OCI-LY7 (cell line): ENCODE measurements at regions of chr5 and their contacts with region 1.

Region 1: GRCh38 chr5:126544087-126544740 is 50.8 kb downstream of the ALDH7A1 start:
- DNase-seq: peak; percentile 86
- H3K4me3 ChIP-seq: no peak overlapping the region
- H3K27ac ChIP-seq: no peak overlapping the region
- H3K4me1 ChIP-seq: peaks cover 21% of the 10 kb centered on the region
- CTCF ChIP-seq: peak; percentile 87

Region 2: GRCh38 chr5:126339215-126339805 is 204.9 kb before region 1 on chr5:
- CTCF ChIA-PET with region 1: no interaction called
- POLR2A ChIA-PET with region 1: interaction called, 9 read pairs
- intact Hi-C with region 1: loop called (anchors 1 kb)
- DNase-seq: peak; percentile 74
- H3K4me3 ChIP-seq: no peak overlapping the region
- H3K27ac ChIP-seq: no peak overlapping the region
- H3K4me1 ChIP-seq: no peaks in the 10 kb centered on the region
- CTCF ChIP-seq: peak; percentile 98

Region 3: GRCh38 chr5:126354012-126354857 is 190.0 kb before region 1 on chr5:
- CTCF ChIA-PET with region 1: no interaction called
- POLR2A ChIA-PET with region 1: interaction called, 7 read pairs
- intact Hi-C with region 1: loop called (anchors 1 kb)
- DNase-seq: peak; percentile 46
- H3K4me3 ChIP-seq: no peak overlapping the region
- H3K27ac ChIP-seq: no peak overlapping the region
- H3K4me1 ChIP-seq: no peaks in the 10 kb centered on the region
- CTCF ChIP-seq: peak; percentile 76

Region 4: GRCh38 chr5:126587551-126588390 is 43.6 kb after region 1 on chr5:
- CTCF ChIA-PET with region 1: no interaction called
- POLR2A ChIA-PET with region 1: no interaction called
- intact Hi-C with region 1: no loop called
- DNase-seq: no peak
- H3K4me3 ChIP-seq: no peak overlapping the region
- H3K27ac ChIP-seq: no peak overlapping the region
- H3K4me1 ChIP-seq: no peaks in the 10 kb centered on the region
- CTCF ChIP-seq: no peak

Region 5: DNA sequence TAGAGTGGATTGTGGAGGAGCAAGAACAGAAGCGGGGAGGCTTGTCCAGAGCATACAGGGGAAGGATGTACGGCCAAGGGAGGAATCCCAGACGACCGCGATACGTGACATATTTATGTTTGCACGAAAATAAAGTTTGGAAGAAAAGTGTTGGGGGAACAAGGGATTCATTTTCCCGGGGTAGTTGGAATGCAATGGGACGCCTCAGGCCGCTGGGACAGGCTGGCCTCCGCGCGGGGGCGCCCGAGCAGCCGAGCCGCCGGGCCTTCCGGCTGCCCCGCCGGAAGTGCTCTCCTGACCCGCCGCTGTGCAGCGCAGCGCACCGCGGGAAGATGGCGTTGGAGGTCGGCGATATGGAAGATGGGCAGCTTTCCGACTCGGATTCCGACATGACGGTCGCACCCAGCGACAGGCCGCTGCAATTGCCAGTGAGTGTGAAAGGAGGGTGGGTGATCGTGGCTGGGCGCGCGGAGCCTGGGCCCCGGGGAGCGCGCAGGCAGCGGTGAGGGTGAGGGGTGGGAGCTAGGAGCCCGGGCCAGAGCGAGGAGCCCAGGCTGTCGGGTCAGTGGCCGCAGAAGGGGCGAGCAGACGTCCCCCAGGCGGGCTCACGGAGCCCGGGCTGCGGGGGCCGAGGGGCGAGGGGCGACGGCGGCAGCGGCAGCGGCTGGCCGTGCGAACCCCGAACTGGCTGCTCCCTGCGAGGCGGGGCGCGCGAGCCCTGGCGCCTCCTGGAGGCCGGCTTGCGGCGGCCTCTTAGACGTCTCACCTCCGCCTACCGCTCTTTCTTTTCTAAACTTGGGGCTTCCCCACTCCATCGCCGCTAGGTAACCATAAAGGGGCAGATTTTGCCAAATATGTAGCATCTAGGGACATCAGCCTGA is 56.7 kb after region 1 on chr5 and contains the start of gene PHAX:
- CTCF ChIA-PET with region 1: no interaction called
- POLR2A ChIA-PET with region 1: interaction called, 9 read pairs
- intact Hi-C with region 1: loop called (anchors 1 kb)
- DNase-seq: peak; percentile 90
- H3K4me3 ChIP-seq: peak within 1 kb of the TSS; percentile 86
- H3K27ac ChIP-seq: peak within 1 kb of the TSS; percentile 97
- H3K4me1 ChIP-seq: peaks cover 36% of the 10 kb centered on the region
- CTCF ChIP-seq: peak; percentile 82
- total RNA-seq, gene PHAX: 73.8 and 89.7 TPM in 2 replicates

Region 6: GRCh38 chr5:126615286-126615685 is 71.1 kb after region 1 on chr5:
- CTCF ChIA-PET with region 1: no interaction called
- POLR2A ChIA-PET with region 1: interaction called, 7 read pairs
- intact Hi-C with region 1: loop called (anchors 1 kb)
- DNase-seq: peak; percentile 94
- H3K4me3 ChIP-seq: peak overlapping the region; percentile 54
- H3K27ac ChIP-seq: peak overlapping the region; percentile 97
- H3K4me1 ChIP-seq: peaks cover 67% of the 10 kb centered on the region
- CTCF ChIP-seq: peak; percentile 94

Region 7: GRCh38 chr5:127492854-127493738 is 948.9 kb after region 1 on chr5:
- CTCF ChIA-PET with region 1: no interaction called
- POLR2A ChIA-PET with region 1: no interaction called
- intact Hi-C with region 1: loop called (anchors 10 kb)
- DNase-seq: peak; percentile 53
- H3K4me3 ChIP-seq: no peak overlapping the region
- H3K27ac ChIP-seq: no peak overlapping the region
- H3K4me1 ChIP-seq: no peaks in the 10 kb centered on the region
- CTCF ChIP-seq: peak; percentile 100